CD8-positive, alpha-beta T cell (primary cell): ENCODE measurements at regions of chr20 and their contacts with region 1.

Region 1: GRCh38 chr20:59087829-59088433 is 45.3 kb upstream of the PRELID3B start:
- DNase-seq: peak; percentile 73 to 94 (median 84)
- ATAC-seq: peak; percentile 87
- H3K4me3 ChIP-seq: no peak overlapping the region
- H3K4me3 Mint-ChIP-seq: no peak overlapping the region
- H3K27ac ChIP-seq: no peak overlapping the region
- H3K27ac Mint-ChIP-seq: no peak overlapping the region
- H3K4me1 ChIP-seq: peaks cover 4% of the 10 kb centered on the region
- H3K4me1 Mint-ChIP-seq: peaks cover 11% of the 10 kb centered on the region
- H3K27me3 ChIP-seq: no peaks in the 10 kb centered on the region
- H3K27me3 Mint-ChIP-seq: no peaks in the 10 kb centered on the region
- CTCF ChIP-seq: peak; percentile 88

Region 2: DNA sequence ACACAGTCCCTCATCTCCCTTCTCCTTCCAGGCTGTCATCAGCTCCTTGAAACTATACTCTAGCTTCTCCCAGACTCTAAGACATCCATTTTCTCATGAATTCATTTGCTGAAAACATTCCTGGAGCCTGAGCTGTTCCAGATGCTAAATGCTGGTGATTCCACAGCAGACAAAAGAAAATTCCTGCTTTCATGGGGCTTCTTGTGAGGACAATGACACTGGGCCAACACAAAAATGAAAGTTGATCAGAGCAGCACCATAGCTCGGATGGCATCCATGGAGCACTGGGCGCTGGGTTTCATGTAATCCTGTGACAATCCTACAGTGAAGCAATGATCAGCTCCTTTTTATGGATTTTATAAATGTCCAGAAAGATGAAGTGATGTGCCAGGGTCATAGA is 484.2 kb before region 1 on chr20:
- CTCF ChIA-PET with region 1: no interaction called
- POLR2A ChIA-PET with region 1: no interaction called
- intact Hi-C with region 1: no loop called
- DNase-seq: no peak
- ATAC-seq: no peak
- H3K4me3 ChIP-seq: no peak overlapping the region
- H3K4me3 Mint-ChIP-seq: no peak overlapping the region
- H3K27ac ChIP-seq: no peak overlapping the region
- H3K27ac Mint-ChIP-seq: no peak overlapping the region
- H3K4me1 ChIP-seq: no peaks in the 10 kb centered on the region
- H3K4me1 Mint-ChIP-seq: no peaks in the 10 kb centered on the region
- H3K27me3 ChIP-seq: no peaks in the 10 kb centered on the region
- H3K27me3 Mint-ChIP-seq: peaks cover under 1% of the 10 kb centered on the region
- CTCF ChIP-seq: no peak

Region 3: DNA sequence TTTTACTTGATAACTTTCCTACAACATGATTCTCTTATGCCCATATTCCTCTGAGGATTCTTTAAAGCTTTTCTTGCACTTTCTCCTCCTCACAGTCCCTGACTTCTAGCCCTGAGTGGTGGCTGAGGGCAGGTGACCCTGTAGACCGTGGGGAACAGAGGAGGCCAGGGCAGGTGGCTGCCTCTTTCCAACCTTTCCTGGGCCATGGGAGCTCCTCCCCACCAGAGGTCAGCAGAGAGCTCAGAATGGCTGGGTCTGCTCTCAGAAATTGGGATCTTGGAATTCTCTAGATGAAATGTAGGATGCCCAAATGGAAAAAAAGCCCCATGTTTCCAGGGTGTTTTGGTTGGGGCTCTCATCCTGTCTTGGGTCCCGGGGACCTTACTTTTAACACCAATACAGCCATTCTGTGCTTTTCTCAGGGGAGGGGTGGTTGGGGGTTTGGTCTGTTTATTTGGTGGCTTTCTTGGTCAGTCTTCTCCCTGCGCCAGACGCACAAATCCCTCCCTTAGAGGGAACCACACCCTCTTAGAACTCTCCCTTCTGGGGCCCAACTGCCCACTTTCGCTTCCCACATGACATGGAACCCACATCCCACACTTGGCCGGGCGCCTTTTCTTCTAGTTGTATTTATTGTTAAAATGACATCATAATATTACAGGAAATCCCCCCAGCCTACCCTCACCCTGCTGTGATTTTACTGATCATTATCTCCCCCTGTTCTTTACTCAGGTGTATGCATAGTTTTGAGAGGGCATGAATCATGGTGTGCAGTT is 217.5 kb before region 1 on chr20:
- CTCF ChIA-PET with region 1: interaction called, 11 read pairs
- POLR2A ChIA-PET with region 1: no interaction called
- intact Hi-C with region 1: loop called (anchors 5 kb)
- DNase-seq: peak in 7 of 9 experiments; percentile 27 to 75 (median 65)
- ATAC-seq: peak; percentile 81
- H3K4me3 ChIP-seq: no peak overlapping the region
- H3K4me3 Mint-ChIP-seq: no peak overlapping the region
- H3K27ac ChIP-seq: no peak overlapping the region
- H3K27ac Mint-ChIP-seq: no peak overlapping the region
- H3K4me1 ChIP-seq: no peaks in the 10 kb centered on the region
- H3K4me1 Mint-ChIP-seq: peaks cover 5% of the 10 kb centered on the region
- H3K27me3 ChIP-seq: no peaks in the 10 kb centered on the region
- H3K27me3 Mint-ChIP-seq: no peaks in the 10 kb centered on the region
- CTCF ChIP-seq: peak; percentile 73

Region 4: GRCh38 chr20:59112978-59113377 is 25.0 kb after region 1 on chr20:
- CTCF ChIA-PET with region 1: interaction called, 12 read pairs
- POLR2A ChIA-PET with region 1: no interaction called
- intact Hi-C with region 1: no loop called
- DNase-seq: no peak
- ATAC-seq: no peak
- H3K4me3 ChIP-seq: no peak overlapping the region
- H3K4me3 Mint-ChIP-seq: no peak overlapping the region
- H3K27ac ChIP-seq: no peak overlapping the region
- H3K27ac Mint-ChIP-seq: no peak overlapping the region
- H3K4me1 ChIP-seq: peaks cover 14% of the 10 kb centered on the region
- H3K4me1 Mint-ChIP-seq: peaks cover 17% of the 10 kb centered on the region
- H3K27me3 ChIP-seq: no peaks in the 10 kb centered on the region
- H3K27me3 Mint-ChIP-seq: no peaks in the 10 kb centered on the region
- CTCF ChIP-seq: no peak

Region 5: DNA sequence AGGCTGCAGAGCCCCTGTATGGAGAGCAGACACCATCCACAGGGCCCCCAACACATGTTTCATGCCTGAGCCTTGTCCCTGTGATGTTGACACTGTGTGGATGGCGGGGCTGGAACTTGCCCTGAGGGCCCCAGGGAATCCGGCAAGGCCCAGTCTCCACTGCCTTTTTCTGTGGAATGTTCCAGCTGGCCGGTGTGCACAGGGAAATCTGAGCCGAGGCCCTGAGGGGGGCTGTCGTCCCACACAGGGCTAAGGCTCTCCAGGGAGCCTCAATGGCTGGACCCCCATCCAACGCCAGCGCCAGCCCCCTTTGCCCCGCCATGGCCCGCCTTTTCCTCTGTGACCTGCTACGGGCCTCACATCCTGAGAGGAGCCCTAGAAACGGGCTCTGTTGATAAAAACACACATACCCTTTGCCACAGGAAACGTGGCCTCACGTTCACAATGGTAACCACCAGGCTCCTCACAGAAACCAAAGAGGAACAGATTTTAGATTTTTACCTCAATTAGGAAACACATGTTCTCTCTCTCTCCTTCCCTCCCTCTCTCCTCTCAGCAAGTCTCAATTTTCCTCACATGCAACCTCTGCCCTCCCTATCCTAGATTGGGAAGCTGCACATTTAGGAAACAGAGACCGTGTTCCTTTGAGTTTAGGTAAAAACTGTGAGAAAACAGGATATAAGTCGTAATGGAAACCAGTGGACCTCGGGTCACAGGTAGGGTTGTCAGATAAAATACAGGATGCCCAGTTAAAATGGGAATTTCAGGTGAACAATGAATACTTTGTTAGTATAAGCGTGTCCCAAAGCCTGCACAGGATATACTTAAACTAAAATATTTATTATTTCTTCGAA is 61.9 kb after region 1 on chr20:
- CTCF ChIA-PET with region 1: interaction called, 23 read pairs
- POLR2A ChIA-PET with region 1: interaction called, 4 read pairs
- intact Hi-C with region 1: loop called (anchors 2 to 5 kb)
- DNase-seq: peak; percentile 66 to 96 (median 77)
- ATAC-seq: peak; percentile 74
- H3K4me3 ChIP-seq: peak overlapping the region in 1 of 2 experiments; percentile 21
- H3K4me3 Mint-ChIP-seq: peak overlapping the region; percentile 71
- H3K27ac ChIP-seq: peak overlapping the region; percentile 90 to 94
- H3K27ac Mint-ChIP-seq: peak overlapping the region; percentile 95
- H3K4me1 ChIP-seq: peaks cover 94% of the 10 kb centered on the region
- H3K4me1 Mint-ChIP-seq: peaks cover 94% of the 10 kb centered on the region
- H3K27me3 ChIP-seq: no peaks in the 10 kb centered on the region
- H3K27me3 Mint-ChIP-seq: no peaks in the 10 kb centered on the region
- CTCF ChIP-seq: no peak

Region 6: GRCh38 chr20:59177261-59178250 is 89.6 kb after region 1 on chr20:
- CTCF ChIA-PET with region 1: interaction called, 20 read pairs
- POLR2A ChIA-PET with region 1: interaction called, 3 read pairs
- intact Hi-C with region 1: no loop called
- DNase-seq: peak in 5 of 9 experiments; percentile 46 to 83 (median 55)
- ATAC-seq: peak; percentile 76
- H3K4me3 ChIP-seq: peak overlapping the region in 1 of 2 experiments; percentile 26
- H3K4me3 Mint-ChIP-seq: peak overlapping the region; percentile 69
- H3K27ac ChIP-seq: peak overlapping the region; percentile 64 to 92
- H3K27ac Mint-ChIP-seq: peak overlapping the region; percentile 94
- H3K4me1 ChIP-seq: peaks cover 75% of the 10 kb centered on the region
- H3K4me1 Mint-ChIP-seq: peaks cover 94% of the 10 kb centered on the region
- H3K27me3 ChIP-seq: no peaks in the 10 kb centered on the region
- H3K27me3 Mint-ChIP-seq: no peaks in the 10 kb centered on the region
- CTCF ChIP-seq: no peak

Region 7: DNA sequence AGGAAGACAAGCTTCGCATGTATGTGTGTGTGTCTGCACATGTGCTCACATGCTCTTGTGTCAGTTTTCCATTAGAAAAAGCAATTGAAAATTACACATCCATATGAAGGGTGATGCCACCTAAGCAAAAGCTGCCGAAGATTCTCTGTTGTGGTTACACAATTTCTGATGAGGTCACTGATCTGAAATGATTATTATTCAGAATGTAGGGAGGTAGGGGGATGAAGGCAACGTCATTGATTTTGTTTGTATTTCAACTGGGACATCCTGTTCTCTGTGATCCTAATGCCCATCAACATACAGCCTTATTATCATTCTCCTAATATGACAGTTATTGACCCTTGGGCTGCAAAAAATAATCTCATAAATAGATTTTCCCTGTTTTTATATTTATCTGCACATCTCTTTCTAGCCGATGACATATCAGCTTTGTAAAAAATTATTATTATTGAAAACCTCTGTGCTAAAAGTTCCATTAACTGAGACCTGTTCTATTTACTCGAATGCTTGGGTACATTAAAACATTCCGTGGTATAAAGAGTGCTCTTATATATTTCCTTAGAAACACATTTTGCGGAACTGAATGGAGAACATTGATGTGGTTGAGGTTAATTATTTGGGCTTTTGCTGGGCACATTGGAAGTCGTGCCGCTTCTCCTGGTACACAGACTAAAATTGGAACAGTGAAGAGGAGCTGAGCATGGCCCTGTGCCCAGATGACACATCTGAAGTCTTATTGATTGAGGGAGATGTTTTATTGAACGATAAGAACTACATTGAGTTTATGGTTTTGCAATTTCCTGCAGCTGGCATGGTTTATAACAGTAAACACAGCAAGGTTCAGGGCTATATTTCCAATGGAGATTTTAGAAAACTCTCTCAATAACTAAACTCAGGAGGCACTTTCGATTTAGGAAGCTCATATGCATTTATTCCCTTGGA is 126.9 kb after region 1 on chr20:
- CTCF ChIA-PET with region 1: interaction called, 204 read pairs
- POLR2A ChIA-PET with region 1: interaction called, 3 read pairs
- intact Hi-C with region 1: no loop called
- DNase-seq: no peak
- ATAC-seq: no peak
- H3K4me3 ChIP-seq: no peak overlapping the region
- H3K4me3 Mint-ChIP-seq: no peak overlapping the region
- H3K27ac ChIP-seq: no peak overlapping the region
- H3K27ac Mint-ChIP-seq: peak overlapping the region; percentile 14
- H3K4me1 ChIP-seq: no peaks in the 10 kb centered on the region
- H3K4me1 Mint-ChIP-seq: peaks cover 5% of the 10 kb centered on the region
- H3K27me3 ChIP-seq: no peaks in the 10 kb centered on the region
- H3K27me3 Mint-ChIP-seq: no peaks in the 10 kb centered on the region
- CTCF ChIP-seq: no peak

Region 8: GRCh38 chr20:59351414-59352040 is 263.6 kb after region 1 on chr20:
- CTCF ChIA-PET with region 1: no interaction called
- POLR2A ChIA-PET with region 1: no interaction called
- intact Hi-C with region 1: no loop called
- DNase-seq: no peak
- ATAC-seq: no peak
- H3K4me3 ChIP-seq: no peak overlapping the region
- H3K4me3 Mint-ChIP-seq: peak overlapping the region; percentile 51
- H3K27ac ChIP-seq: no peak overlapping the region
- H3K27ac Mint-ChIP-seq: peak overlapping the region; percentile 6
- H3K4me1 ChIP-seq: no peaks in the 10 kb centered on the region
- H3K4me1 Mint-ChIP-seq: peaks cover 11% of the 10 kb centered on the region
- H3K27me3 ChIP-seq: no peaks in the 10 kb centered on the region
- H3K27me3 Mint-ChIP-seq: no peaks in the 10 kb centered on the region
- CTCF ChIP-seq: no peak

Region 9: GRCh38 chr20:59495894-59496510 is 408.1 kb after region 1 on chr20:
- CTCF ChIA-PET with region 1: interaction called, 3 read pairs
- POLR2A ChIA-PET with region 1: no interaction called
- intact Hi-C with region 1: loop called in 1 of 2 experiments (anchors 10 kb)
- DNase-seq: peak; percentile 41 to 80 (median 66)
- ATAC-seq: peak; percentile 36
- H3K4me3 ChIP-seq: no peak overlapping the region
- H3K4me3 Mint-ChIP-seq: no peak overlapping the region
- H3K27ac ChIP-seq: no peak overlapping the region
- H3K27ac Mint-ChIP-seq: no peak overlapping the region
- H3K4me1 ChIP-seq: no peaks in the 10 kb centered on the region
- H3K4me1 Mint-ChIP-seq: no peaks in the 10 kb centered on the region
- H3K27me3 ChIP-seq: peaks cover 0 to 2% of the 10 kb centered on the region in 2 experiments
- H3K27me3 Mint-ChIP-seq: peaks cover 21% of the 10 kb centered on the region
- CTCF ChIP-seq: peak; percentile 80

Region 10: GRCh38 chr20:60057123-60057801 is 969.3 kb after region 1 on chr20:
- CTCF ChIA-PET with region 1: no interaction called
- POLR2A ChIA-PET with region 1: no interaction called
- intact Hi-C with region 1: no loop called
- DNase-seq: peak; percentile 42 to 83 (median 65)
- ATAC-seq: peak; percentile 47
- H3K4me3 ChIP-seq: peak overlapping the region in 1 of 2 experiments; percentile 55
- H3K4me3 Mint-ChIP-seq: peak overlapping the region; percentile 13
- H3K27ac ChIP-seq: peak overlapping the region in 1 of 2 experiments; percentile 78
- H3K27ac Mint-ChIP-seq: peak overlapping the region; percentile 50
- H3K4me1 ChIP-seq: peaks cover 46% of the 10 kb centered on the region
- H3K4me1 Mint-ChIP-seq: peaks cover 46% of the 10 kb centered on the region
- H3K27me3 ChIP-seq: no peaks in the 10 kb centered on the region
- H3K27me3 Mint-ChIP-seq: no peaks in the 10 kb centered on the region
- CTCF ChIP-seq: peak; percentile 81